Activated CD4-positive, alpha-beta T cell treated with anti-CD3 and anti-CD28 coated beads, Interleukin-2, amount 10 ng/mL, durations not matched to agents 24 days and 14 days (primary cell): ENCODE measurements at regions of chrX and their contacts with region 1.

Region 1: GRCh38 chrX:155216179-155216939 is at the start of gene VBP1:
- DNase-seq: peak; percentile 95
- H3K4me3 Mint-ChIP-seq: peak within 1 kb of the TSS; percentile 99
- H3K27ac Mint-ChIP-seq: peak within 1 kb of the TSS; percentile 90
- H3K4me1 Mint-ChIP-seq: peaks cover 19% of the 10 kb centered on the region
- H3K27me3 Mint-ChIP-seq: no peaks in the 10 kb centered on the region
- total RNA-seq, gene VBP1: 86.4 and 87.5 TPM in 2 replicates

Region 2: DNA sequence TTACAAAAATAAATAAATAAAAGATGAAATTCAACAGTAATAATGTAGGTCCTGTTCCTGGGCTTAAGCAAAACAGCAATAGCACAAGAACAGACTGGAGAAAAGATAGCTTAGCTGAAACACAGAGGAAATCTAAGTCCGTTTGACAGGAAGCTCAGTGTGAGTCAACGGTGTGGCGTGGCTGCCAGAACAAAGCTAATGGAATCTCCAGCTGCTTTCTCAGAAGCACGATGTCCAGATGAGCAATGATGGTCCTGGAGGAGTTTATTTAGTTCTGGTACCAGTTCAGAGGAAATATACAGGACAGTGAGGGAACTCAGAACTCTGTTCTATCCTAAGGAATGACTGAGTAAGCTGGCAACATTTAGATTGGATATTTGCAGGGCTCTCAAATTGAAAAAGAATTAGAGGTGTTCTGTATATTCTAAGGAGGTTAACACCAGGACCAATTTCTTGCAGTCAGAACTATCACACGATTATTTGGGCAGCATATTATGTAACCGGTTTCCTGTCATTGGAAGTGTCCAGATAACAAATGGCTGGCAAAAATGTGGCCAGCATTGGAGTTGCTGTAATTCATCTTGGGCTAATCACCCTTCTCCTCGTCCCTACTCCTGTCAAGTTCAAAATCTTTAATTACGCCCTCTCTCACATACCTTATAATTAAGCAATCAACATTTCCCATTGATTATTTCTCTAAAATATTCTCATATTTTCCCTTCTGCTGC is 478.2 kb before region 1 on chrX:
- intact Hi-C with region 1: no loop called
- DNase-seq: peak; percentile 71
- H3K4me3 Mint-ChIP-seq: peak overlapping the region; percentile 53
- H3K27ac Mint-ChIP-seq: peak overlapping the region; percentile 44
- H3K4me1 Mint-ChIP-seq: peaks cover 57% of the 10 kb centered on the region
- H3K27me3 Mint-ChIP-seq: no peaks in the 10 kb centered on the region

Region 3: GRCh38 chrX:154918060-154918483 is 298.3 kb before region 1 on chrX:
- intact Hi-C with region 1: loop called (anchors 10 kb)
- DNase-seq: peak; percentile 70
- H3K4me3 Mint-ChIP-seq: peak overlapping the region; percentile 73
- H3K27ac Mint-ChIP-seq: peak overlapping the region; percentile 43
- H3K4me1 Mint-ChIP-seq: peaks cover 3% of the 10 kb centered on the region
- H3K27me3 Mint-ChIP-seq: peaks cover 20% of the 10 kb centered on the region

Region 4: DNA sequence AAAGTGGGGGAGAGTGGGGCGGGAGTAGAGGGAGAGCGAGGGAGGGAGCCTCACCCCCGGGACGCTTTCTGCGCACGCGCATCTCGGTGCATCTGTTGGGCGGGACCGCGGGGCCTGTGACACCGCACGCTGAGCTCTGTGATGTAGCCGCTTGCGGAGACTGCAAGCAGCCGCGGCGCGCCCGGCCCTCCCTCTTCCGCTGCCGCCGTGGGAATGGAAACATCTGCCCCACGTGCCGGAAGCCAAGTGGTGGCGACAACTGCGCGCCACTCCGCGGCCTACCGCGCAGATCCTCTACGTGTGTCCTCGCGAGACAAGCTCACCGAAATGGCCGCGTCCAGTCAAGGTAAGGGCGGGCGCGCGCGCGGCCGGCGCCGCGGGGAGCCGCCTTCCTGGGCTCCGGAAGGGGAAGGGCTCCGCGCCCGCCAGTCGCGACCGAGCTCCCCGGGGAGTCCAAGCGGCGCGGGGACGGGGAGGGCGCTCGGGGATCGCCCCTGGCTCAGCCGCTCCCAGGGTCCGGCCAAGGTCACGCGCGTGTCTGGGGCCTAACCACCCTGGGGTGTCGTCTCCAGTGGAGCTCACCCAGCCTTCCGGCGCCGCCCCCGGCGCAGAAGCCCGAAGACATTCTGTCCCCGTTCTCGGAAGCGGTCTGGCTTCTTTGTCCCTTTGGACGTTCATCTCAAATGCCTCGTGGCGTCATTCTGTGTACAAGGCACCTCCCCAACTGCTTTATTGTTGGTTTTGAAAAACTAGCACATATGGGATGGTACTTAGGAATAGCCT is 189.4 kb before region 1 on chrX and contains the start of gene FUNDC2:
- intact Hi-C with region 1: loop called (anchors 2 kb)
- DNase-seq: peak; percentile 98
- H3K4me3 Mint-ChIP-seq: peak within 1 kb of the TSS; percentile 87
- H3K27ac Mint-ChIP-seq: peak within 1 kb of the TSS; percentile 92
- H3K4me1 Mint-ChIP-seq: peaks cover 11% of the 10 kb centered on the region
- H3K27me3 Mint-ChIP-seq: peaks cover 16% of the 10 kb centered on the region
- total RNA-seq, gene FUNDC2: 74.9 and 75.7 TPM in 2 replicates

Region 5: DNA sequence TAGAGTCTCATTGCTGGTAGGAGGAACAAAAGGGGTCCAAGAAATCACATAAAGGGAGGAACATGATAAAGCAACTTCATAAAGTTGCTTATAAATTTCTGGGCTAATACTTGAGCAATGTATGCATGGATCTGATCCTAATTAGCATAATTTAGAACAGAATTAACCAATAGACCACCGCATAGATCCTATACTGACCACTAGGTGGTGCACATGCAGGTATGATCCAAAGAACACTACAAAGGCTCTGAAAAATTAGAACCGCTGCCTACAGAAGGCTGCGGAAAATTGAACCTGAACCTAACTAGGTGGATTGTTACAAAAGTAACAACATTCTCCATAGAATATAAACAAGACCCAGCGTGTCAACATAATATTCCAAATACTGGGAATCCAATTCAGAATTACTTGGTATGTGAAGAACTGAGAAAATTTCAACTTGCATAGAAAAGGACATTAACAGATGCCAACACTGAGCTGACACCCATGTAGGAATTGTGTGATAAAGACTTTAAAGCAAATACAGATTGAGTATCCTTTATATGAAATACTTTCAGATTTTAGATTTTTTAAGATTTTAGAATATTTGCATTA is 121.8 kb before region 1 on chrX:
- intact Hi-C with region 1: loop called (anchors 1 kb)
- DNase-seq: peak; percentile 73
- H3K4me3 Mint-ChIP-seq: no peak overlapping the region
- H3K27ac Mint-ChIP-seq: no peak overlapping the region
- H3K4me1 Mint-ChIP-seq: peaks cover 2% of the 10 kb centered on the region
- H3K27me3 Mint-ChIP-seq: no peaks in the 10 kb centered on the region

Region 6: GRCh38 chrX:155612312-155613224 is 396.2 kb after region 1 on chrX and contains the start of gene TMLHE:
- intact Hi-C with region 1: loop called (anchors 2 kb)
- DNase-seq: peak; percentile 88
- H3K4me3 Mint-ChIP-seq: peak within 1 kb of the TSS; percentile 92
- H3K27ac Mint-ChIP-seq: peak within 1 kb of the TSS; percentile 92
- H3K4me1 Mint-ChIP-seq: peaks cover 12% of the 10 kb centered on the region
- H3K27me3 Mint-ChIP-seq: no peaks in the 10 kb centered on the region
- total RNA-seq, gene TMLHE: 7.1 and 9.0 TPM in 2 replicates

Region 7: DNA sequence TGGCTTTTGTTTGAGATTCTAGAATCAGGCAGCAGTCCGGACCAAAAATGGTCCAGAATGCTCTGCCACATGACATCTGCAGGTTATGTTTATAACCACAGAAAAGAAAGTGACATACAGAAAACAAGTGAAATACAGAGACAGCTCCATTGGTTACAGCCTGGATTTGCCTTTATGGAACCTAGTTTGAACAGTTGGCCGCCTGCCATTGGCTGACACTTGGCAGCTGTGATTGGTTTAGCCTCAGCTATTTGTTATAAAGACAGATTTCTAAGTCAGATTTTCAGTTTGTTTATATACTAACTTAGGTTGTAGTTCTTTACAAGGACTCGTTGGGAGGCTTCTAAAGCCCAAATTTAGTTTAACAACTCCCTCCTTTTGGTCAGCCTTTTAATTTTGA is 740.3 kb after region 1 on chrX:
- intact Hi-C with region 1: no loop called
- DNase-seq: no peak
- H3K4me3 Mint-ChIP-seq: no peak overlapping the region
- H3K27ac Mint-ChIP-seq: no peak overlapping the region
- H3K4me1 Mint-ChIP-seq: no peaks in the 10 kb centered on the region
- H3K27me3 Mint-ChIP-seq: peaks cover 2% of the 10 kb centered on the region